ENCODE measurements at regions of chr17 and their contacts with region 1.

Region 1: DNA sequence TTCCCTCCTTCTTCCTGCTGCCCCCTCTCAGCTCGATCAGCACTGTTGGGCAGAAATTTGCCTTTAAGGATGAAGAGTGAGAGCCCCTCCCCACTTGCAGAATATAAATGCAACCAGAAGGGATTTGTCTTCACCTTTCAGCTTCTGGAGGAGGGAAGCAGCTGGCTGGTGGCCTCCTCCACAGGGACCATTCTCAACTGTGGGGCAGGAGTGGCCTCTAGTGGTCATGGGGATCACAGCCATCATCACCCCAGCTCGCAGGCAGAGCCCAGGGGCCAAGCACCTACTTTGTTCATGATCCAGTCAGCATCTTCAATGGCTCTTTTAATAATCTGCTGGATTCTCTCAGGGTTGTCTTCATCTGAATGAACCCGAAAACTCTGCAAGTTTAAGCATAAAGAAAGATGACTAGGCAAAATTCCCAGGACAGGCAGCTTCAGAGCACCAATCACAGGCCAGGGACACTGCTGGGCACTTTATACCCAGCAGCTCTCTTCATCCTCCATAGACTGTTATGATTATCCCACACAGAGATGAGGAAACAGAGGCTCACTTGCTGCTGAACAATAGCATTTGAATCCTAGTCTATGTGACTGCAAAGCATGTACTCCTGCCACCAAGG is 13.1 kb downstream of the LYRM9 start:
- DNase-seq: peak; percentile 43 to 87
- H3K4me3 ChIP-seq: no peak overlapping the region
- H3K27ac ChIP-seq: no peak overlapping the region
- H3K4me1 ChIP-seq: no peaks in the 10 kb centered on the region; a peak in 1 of 7 replicates
- H3K27me3 ChIP-seq: 0 out of 7 replicates have a peak, but pooled peaks cover 0 to 2% (median 0%) of the 10 kb centered on the region in 4 experiments
- CTCF ChIP-seq: peak; percentile 95 to 100 (median 97)
- EP300 ChIP-seq: no peak
- POLR2A ChIP-seq: no peak
- RAD21 ChIP-seq: peak; percentile 99

Region 2: GRCh38 chr17:27760069-27760885 is 119.8 kb before region 1 on chr17:
- CTCF ChIA-PET with region 1: interaction called, 140 read pairs
- POLR2A ChIA-PET with region 1: interaction called, 3 read pairs
- DNase-seq: peak; percentile 34 to 96
- H3K4me3 ChIP-seq: no peak overlapping the region
- H3K27ac ChIP-seq: no peak overlapping the region
- H3K4me1 ChIP-seq: no peaks in the 10 kb centered on the region
- H3K27me3 ChIP-seq: no peaks in the 10 kb centered on the region
- CTCF ChIP-seq: peak; percentile 77 to 80 (median 78)
- EP300 ChIP-seq: no peak
- POLR2A ChIP-seq: no peak
- RAD21 ChIP-seq: peak; percentile 75

Region 3: GRCh38 chr17:27778193-27778592 is 101.9 kb before region 1 on chr17:
- CTCF ChIA-PET with region 1: interaction called, 52 read pairs
- POLR2A ChIA-PET with region 1: no interaction called
- DNase-seq: no peak
- H3K4me3 ChIP-seq: no peak overlapping the region
- H3K27ac ChIP-seq: no peak overlapping the region
- H3K4me1 ChIP-seq: peaks cover 0 to 6% (median 4%) of the 10 kb centered on the region in 4 experiments; a peak in 6 of 7 replicates
- H3K27me3 ChIP-seq: no peaks in the 10 kb centered on the region
- CTCF ChIP-seq: no peak
- EP300 ChIP-seq: no peak
- POLR2A ChIP-seq: no peak
- RAD21 ChIP-seq: no peak

Region 4: GRCh38 chr17:27805520-27806146 is 74.5 kb before region 1 on chr17:
- CTCF ChIA-PET with region 1: interaction called, 299 read pairs
- POLR2A ChIA-PET with region 1: interaction called, 6 read pairs
- DNase-seq: peak; percentile 59 to 91
- H3K4me3 ChIP-seq: peak overlapping the region in 1 of 4 experiments; percentile 29; a peak in 1 of 8 replicates
- H3K27ac ChIP-seq: no peak overlapping the region
- H3K4me1 ChIP-seq: peaks cover 0 to 8% (median 4%) of the 10 kb centered on the region in 4 experiments
- H3K27me3 ChIP-seq: no peaks in the 10 kb centered on the region
- CTCF ChIP-seq: peak; percentile 76 to 97 (median 92)
- EP300 ChIP-seq: no peak
- POLR2A ChIP-seq: no peak
- RAD21 ChIP-seq: peak; percentile 89 to 94

Region 5: GRCh38 chr17:27824745-27825144 is 55.4 kb before region 1 on chr17:
- CTCF ChIA-PET with region 1: interaction called, 17 read pairs
- POLR2A ChIA-PET with region 1: no interaction called
- DNase-seq: no peak
- H3K4me3 ChIP-seq: no peak overlapping the region
- H3K27ac ChIP-seq: no peak overlapping the region
- H3K4me1 ChIP-seq: peaks cover 0 to under 1% (median 0%) of the 10 kb centered on the region in 4 experiments; a peak in 1 of 7 replicates
- H3K27me3 ChIP-seq: no peaks in the 10 kb centered on the region
- CTCF ChIP-seq: no peak
- EP300 ChIP-seq: no peak
- POLR2A ChIP-seq: no peak
- RAD21 ChIP-seq: no peak

Region 6: DNA sequence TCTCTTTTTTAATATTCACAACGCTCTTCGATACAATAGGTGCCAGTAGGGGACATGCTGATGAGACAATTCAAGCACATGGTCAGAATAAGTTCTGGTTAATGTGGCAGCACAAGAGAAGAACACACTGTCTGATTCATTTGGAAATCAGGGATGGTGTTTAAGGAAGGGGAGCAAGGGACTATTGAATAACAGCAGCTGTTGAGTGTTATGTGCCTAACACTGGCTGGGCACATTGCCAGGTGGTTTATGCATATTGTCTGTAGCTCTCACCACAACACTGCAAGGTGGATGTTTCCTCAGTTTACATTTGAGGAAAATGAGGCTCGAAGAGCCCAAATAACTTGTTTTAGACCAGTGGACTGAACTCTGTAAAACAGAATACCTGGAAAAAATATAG is 31.2 kb before region 1 on chr17:
- CTCF ChIA-PET with region 1: interaction called, 32 read pairs
- POLR2A ChIA-PET with region 1: no interaction called
- DNase-seq: no peak
- H3K4me3 ChIP-seq: no peak overlapping the region
- H3K27ac ChIP-seq: no peak overlapping the region
- H3K4me1 ChIP-seq: peaks cover 0 to 8% (median 0%) of the 10 kb centered on the region in 4 experiments; a peak in 2 of 7 replicates
- H3K27me3 ChIP-seq: no peaks in the 10 kb centered on the region; a peak in 1 of 7 replicates
- CTCF ChIP-seq: no peak
- EP300 ChIP-seq: no peak
- POLR2A ChIP-seq: no peak
- RAD21 ChIP-seq: no peak

Region 7: DNA sequence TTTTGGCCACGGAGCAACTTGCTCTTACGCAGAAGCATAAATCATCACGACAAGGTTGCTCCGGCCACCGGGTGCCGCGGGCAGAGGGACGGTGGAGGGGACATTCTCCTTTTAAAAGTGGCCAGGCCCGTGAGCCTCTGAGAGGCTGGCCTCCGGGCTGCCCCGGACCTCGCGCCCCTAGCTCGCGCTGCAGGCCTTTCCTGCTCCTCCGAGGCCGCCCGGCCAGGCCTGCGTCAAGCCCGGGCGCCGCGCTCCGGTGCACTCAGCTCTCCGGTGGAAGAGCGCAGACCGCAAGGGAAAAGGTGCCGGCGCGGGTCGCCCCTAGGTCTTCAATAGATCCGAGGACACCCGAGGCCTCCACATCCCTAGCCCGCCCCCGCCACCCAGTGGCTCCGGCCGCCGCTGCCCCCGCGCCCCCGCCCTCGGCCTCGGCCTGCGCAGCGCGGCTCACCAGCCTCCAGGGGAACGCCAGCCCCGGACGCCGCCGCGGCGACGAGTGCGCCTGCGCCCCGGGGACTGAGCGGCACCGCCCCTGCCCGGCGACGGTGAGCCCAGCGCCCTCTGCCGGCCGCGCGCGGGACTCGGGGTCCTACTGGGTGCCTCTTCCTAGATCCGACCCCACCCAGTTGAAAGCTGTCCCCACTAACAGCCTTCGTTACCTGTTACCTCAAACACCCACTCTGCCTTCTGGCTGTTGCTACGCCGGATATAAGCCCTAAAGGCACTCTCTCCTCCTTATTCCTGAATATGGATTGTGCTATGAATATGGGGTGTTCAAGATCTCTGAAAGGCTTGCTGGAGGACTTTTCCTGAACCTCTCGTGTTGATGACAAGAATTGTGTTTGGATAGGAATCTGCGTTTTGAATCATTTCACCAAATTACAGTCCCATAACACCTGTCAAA is 13.0 kb after region 1 on chr17 and contains the start of gene LYRM9:
- CTCF ChIA-PET with region 1: interaction called, 17 read pairs
- POLR2A ChIA-PET with region 1: interaction called, 6 read pairs
- DNase-seq: peak; percentile 75 to 98
- H3K4me3 ChIP-seq: peak within 1 kb of the TSS; percentile 42 to 63 (median 61)
- H3K27ac ChIP-seq: no peak within 1 kb of the TSS
- H3K4me1 ChIP-seq: peaks cover 4 to 29% (median 21%) of the 10 kb centered on the region in 4 experiments; a peak in 6 of 7 replicates
- H3K27me3 ChIP-seq: peaks cover 0 to 6% (median 0%) of the 10 kb centered on the region in 4 experiments; a peak in 2 of 7 replicates
- CTCF ChIP-seq: peak; percentile 81 to 92 (median 83)
- EP300 ChIP-seq: no peak; a peak in 1 of 3 replicates
- POLR2A ChIP-seq: 0 out of 3 replicates have a peak, but pooled peaks of 1 of the 2 experiments have one; percentile 31
- RAD21 ChIP-seq: peak; percentile 34 to 63; a peak in 3 of 4 replicates
- total RNA-seq, gene LYRM9: 2.1 and 4.3 TPM in 2 replicates

Region 8: GRCh38 chr17:27956601-27957445 is 76.7 kb after region 1 on chr17:
- CTCF ChIA-PET with region 1: no interaction called
- POLR2A ChIA-PET with region 1: no interaction called
- DNase-seq: no peak
- H3K4me3 ChIP-seq: no peak overlapping the region
- H3K27ac ChIP-seq: no peak overlapping the region
- H3K4me1 ChIP-seq: peaks cover 2 to 18% (median 12%) of the 10 kb centered on the region in 4 experiments
- H3K27me3 ChIP-seq: no peaks in the 10 kb centered on the region
- CTCF ChIP-seq: no peak
- EP300 ChIP-seq: no peak
- POLR2A ChIP-seq: no peak
- RAD21 ChIP-seq: no peak

Measured in H1 (cell line).